HEK293 (cell line): ENCODE measurements at regions of chr21 and their contacts with region 1.

Region 1: DNA sequence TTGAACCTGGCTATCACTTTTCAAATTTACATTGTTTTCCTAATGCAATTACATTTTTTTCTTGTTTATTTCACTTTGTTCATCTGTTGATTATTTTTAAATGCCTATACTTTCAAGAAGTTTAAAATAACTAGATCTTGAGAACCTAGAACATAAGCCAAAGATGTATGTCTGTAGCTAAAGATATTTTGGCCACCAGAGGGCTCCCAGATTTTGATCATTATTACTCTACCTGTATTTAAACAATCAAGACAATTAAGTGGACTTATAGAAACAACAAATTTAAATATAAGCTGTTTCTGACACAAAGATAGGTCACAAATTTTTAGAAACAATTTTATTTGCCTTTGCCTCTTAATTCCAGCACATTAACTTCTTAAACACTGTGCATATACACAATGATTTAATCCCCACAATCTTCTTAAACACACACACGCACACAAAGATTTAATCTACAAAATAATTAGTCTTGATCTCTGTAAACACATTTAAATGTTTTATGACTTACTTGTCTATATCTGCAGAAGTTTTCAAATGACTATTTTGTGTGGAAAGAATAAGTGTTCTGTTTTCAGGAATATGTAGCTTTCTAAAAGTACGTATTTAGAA is 380.0 kb downstream of the DSCAM start:
- H3K4me3 ChIP-seq: no peak overlapping the region
- H3K27ac ChIP-seq: no peak overlapping the region
- H3K4me1 ChIP-seq: no peaks in the 10 kb centered on the region
- CTCF ChIP-seq: no peak

Region 2: GRCh38 chr21:40512590-40512989 is 45.6 kb after region 1 on chr21:
- CTCF ChIA-PET with region 1: interaction called, 16 read pairs
- POLR2A ChIA-PET with region 1: no interaction called
- H3K4me3 ChIP-seq: no peak overlapping the region
- H3K27ac ChIP-seq: no peak overlapping the region
- H3K4me1 ChIP-seq: no peaks in the 10 kb centered on the region
- CTCF ChIP-seq: no peak

Region 3: DNA sequence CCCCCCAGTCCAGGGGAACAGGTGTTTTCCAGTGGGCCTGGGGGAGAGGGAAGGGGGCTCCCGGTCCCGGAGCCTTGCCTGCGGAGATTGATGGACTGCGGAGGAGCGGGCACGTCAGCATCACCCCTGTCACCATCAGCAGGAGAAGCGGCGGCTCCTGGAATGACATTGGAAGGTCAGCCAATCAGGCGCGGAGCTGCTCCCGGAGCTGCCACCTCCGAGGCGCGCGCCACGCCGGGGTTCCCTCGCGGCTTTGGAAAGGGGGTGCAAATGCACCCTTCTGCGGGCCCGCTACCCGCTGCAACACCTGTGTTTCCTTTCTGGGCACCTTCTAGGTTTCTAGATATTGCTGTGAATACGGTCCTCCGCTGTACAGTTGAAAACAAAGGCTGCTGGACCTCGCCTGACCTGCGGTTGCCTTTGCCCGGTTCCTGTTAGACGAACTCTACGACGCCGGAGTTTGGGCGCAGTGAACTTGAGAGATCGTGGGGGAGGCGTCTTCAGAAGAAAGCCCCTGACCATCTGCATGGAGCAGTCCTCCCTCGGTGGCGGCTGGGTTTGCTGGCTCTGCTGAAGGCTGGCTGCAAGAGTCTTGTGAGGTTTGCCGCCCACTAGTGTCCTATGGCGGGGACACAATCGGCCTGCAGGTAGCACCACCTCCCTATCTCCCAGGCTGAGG is 374.7 kb after region 1 on chr21:
- CTCF ChIA-PET with region 1: interaction called, 20 read pairs
- POLR2A ChIA-PET with region 1: no interaction called
- H3K4me3 ChIP-seq: peak overlapping the region; percentile 42
- H3K27ac ChIP-seq: no peak overlapping the region
- H3K4me1 ChIP-seq: peaks cover 12% of the 10 kb centered on the region
- CTCF ChIP-seq: no peak

Region 4: GRCh38 chr21:41068967-41069642 is 602.1 kb after region 1 on chr21:
- CTCF ChIA-PET with region 1: interaction called, 14 read pairs
- POLR2A ChIA-PET with region 1: no interaction called
- H3K4me3 ChIP-seq: peak overlapping the region; percentile 16
- H3K27ac ChIP-seq: no peak overlapping the region
- H3K4me1 ChIP-seq: no peaks in the 10 kb centered on the region
- CTCF ChIP-seq: peak; percentile 87

Region 5: DNA sequence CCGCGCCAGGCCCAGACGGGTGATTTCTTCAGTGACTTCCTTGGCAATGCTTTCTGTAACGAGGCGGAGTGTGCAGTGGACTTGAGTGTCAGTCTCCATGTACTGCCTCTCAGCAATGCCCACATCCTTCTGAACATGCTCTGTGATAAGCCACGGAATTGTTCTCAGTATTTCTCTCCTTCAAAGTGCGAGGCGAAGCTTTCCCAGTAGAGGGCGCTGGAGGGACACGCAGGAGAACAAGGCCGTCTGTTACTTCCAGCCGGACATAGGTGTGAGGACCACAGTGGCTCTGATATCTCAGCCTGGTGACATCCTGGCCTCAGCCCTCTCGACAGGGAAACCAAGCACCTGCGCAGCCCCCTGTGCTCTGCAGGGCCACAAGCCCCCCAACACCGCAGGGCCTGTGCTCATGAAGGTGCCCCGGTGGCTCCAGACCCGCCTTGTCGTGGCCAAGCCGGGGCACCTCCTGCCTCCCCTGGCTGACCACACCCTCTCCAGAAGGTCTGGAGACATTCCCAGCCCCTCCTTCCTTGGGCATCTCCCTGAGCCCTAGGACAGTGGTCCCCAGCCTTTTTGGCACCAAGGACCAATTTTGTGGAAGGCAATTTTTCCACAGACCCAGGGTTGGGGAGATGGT is 654.9 kb after region 1 on chr21:
- CTCF ChIA-PET with region 1: no interaction called
- POLR2A ChIA-PET with region 1: no interaction called
- H3K4me3 ChIP-seq: no peak overlapping the region
- H3K27ac ChIP-seq: no peak overlapping the region
- H3K4me1 ChIP-seq: no peaks in the 10 kb centered on the region
- CTCF ChIP-seq: peak; percentile 76; the same call in 1 of the 2 replicates